H1 (cell line): ENCODE measurements at regions of chr3 and their contacts with region 1.

Region 1: GRCh38 chr3:81581966-81582599 is 179.4 kb downstream of the GBE1 start:
- DNase-seq: peak in 1 of 2 experiments; percentile 5
- H3K4me3 ChIP-seq: no peak overlapping the region
- H3K27ac ChIP-seq: no peak overlapping the region
- H3K4me1 ChIP-seq: peaks cover 0 to 4% (median 2%) of the 10 kb centered on the region in 4 experiments; a peak in 1 of 7 replicates
- H3K27me3 ChIP-seq: no peaks in the 10 kb centered on the region
- CTCF ChIP-seq: peak; percentile 30 to 83 (median 61)
- EP300 ChIP-seq: no peak
- POLR2A ChIP-seq: no peak
- RAD21 ChIP-seq: peak; percentile 75

Region 2: GRCh38 chr3:81558106-81558505 is 24.0 kb before region 1 on chr3:
- CTCF ChIA-PET with region 1: interaction called, 18 read pairs
- POLR2A ChIA-PET with region 1: no interaction called
- DNase-seq: no peak
- H3K4me3 ChIP-seq: no peak overlapping the region
- H3K27ac ChIP-seq: no peak overlapping the region
- H3K4me1 ChIP-seq: no peaks in the 10 kb centered on the region
- H3K27me3 ChIP-seq: no peaks in the 10 kb centered on the region
- CTCF ChIP-seq: no peak
- EP300 ChIP-seq: no peak
- POLR2A ChIP-seq: no peak
- RAD21 ChIP-seq: no peak

Region 3: DNA sequence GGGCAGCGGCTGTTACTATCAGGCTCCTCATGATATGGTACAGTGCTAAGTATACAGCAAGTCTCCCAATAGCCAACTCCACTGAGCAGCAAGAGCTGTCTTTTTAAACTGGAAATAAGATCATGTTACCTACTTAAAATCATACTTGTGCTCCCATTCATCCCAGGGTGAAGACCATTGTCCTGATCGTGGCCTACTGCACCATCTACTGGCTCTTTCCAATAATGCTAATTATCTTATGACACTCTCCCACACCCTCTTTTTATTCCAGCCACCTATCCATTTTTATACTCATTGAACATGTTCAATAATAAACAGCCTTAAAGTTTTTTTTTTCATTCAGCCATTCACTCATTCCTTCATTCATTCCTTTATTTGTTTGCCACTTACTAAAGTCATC is 61.6 kb after region 1 on chr3:
- CTCF ChIA-PET with region 1: interaction called, 51 read pairs
- POLR2A ChIA-PET with region 1: no interaction called
- DNase-seq: no peak
- H3K4me3 ChIP-seq: no peak overlapping the region
- H3K27ac ChIP-seq: no peak overlapping the region
- H3K4me1 ChIP-seq: no peaks in the 10 kb centered on the region
- H3K27me3 ChIP-seq: no peaks in the 10 kb centered on the region
- CTCF ChIP-seq: peak in 2 of 3 experiments; percentile 47 to 53; a peak in 2 of 4 replicates
- EP300 ChIP-seq: no peak
- POLR2A ChIP-seq: no peak
- RAD21 ChIP-seq: peak; percentile 81 to 84